Activated T-helper 2 cell treated with anti-CD3 and anti-CD28 coated beads, Interferon-gamma antibody, Interleukin-2, Interleukin-4, amounts not matched to agents 10 μg/mL and 5 μg/mL and 100 μg/mL, durations not matched to agents 14 hours and 24 hours and 36 hours (primary cell): ENCODE measurements at regions of chr19 and their contacts with region 1.

Region 1: DNA sequence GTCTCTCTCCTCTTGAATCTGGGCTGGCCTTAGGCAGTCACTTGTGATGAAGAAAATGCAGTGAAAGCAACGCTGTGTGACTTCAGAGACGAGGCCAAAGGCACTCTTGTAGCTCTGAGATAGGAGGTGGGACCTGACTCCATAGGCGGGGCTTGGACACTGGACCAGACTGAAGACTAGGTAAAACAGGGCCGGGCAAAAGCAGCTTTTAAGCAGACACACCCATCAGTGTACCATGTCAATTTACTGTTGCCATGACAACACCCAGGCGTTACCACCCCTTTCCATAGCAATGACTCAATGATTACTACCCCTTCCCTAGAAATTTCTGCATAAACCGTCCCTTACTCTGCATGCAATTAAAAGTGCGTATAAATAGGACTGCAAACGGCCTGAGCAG is 6.6 kb upstream of the EID2 start:
- DNase-seq: peak; percentile 7
- H3K4me3 Mint-ChIP-seq: no peak overlapping the region
- H3K27ac Mint-ChIP-seq: no peak overlapping the region
- H3K4me1 Mint-ChIP-seq: peaks cover 19% of the 10 kb centered on the region
- H3K27me3 Mint-ChIP-seq: no peaks in the 10 kb centered on the region

Region 2: DNA sequence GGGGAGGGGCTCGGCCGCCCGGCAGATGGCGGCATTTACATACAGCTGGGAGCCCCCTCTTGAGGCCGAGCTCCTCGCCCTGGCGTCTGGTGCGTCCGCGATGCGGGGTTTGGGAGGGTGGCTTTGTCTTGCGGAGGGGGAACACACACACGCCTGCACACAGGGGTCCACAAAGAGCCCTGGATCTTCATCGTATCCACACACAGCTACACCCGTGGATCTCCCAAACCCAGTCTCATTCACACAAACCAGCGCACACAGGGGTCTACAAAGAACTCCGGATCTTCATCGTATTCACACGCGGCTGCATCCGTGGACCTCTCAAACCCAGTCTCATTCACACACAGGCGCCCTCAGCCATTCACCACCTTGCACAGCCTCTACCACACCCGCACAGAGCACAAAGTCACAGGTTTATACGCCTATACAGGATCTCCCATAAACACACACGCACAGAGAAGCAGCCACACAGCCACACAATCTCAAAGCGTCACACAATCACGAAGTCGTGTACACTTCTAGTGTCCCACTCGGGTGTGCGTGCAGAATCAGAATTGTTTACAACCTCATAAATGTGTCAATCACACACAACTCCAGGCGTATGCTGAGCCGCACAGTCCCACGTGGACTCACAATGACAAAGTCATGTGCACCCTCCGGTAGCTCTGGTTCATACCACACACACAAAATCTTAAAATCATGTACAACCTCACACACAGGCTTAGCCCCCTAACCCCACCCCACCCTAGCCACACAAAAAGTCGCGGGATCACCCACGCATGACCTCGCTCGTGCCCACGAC is 48.4 kb before region 1 on chr19:
- intact Hi-C with region 1: no loop called
- DNase-seq: no peak
- H3K4me3 Mint-ChIP-seq: peak overlapping the region; percentile 34
- H3K27ac Mint-ChIP-seq: no peak overlapping the region
- H3K4me1 Mint-ChIP-seq: peaks cover 15% of the 10 kb centered on the region
- H3K27me3 Mint-ChIP-seq: peaks cover 43% of the 10 kb centered on the region

Region 3: GRCh38 chr19:39590265-39590664 is 43.7 kb after region 1 on chr19:
- intact Hi-C with region 1: no loop called
- DNase-seq: no peak
- H3K4me3 Mint-ChIP-seq: no peak overlapping the region
- H3K27ac Mint-ChIP-seq: no peak overlapping the region
- H3K4me1 Mint-ChIP-seq: no peaks in the 10 kb centered on the region
- H3K27me3 Mint-ChIP-seq: no peaks in the 10 kb centered on the region

Region 4: DNA sequence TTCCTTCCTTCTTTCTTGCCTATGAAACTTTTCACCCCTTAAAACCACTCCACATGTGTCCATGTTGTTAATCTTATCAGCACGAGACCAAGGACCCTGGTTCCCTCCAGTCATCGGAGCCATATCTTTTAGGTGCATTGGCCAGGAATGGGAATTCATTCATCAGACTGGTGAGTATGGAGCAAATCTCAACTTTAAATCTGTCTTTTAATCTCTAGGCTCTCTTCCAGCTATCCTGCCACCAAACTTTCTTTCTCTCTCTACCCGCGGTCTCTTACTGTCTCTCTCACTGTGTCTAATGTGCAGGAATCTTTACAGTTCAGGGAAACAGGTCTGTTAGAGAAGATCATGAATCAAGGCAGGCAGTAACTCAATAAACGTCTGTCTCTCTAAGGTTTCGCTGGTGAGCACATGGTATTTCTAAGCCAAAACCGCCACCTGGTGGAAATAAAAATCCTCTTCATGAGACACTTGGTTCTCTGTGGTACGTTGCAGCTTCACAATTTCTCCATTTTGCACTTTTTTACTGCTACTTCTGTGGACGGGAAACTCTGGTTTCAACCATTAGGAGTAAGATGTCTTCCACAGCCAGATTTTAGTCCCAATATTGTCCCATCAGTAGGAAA is 125.3 kb after region 1 on chr19:
- intact Hi-C with region 1: loop called (anchors 1 kb)
- DNase-seq: peak; percentile 31
- H3K4me3 Mint-ChIP-seq: no peak overlapping the region
- H3K27ac Mint-ChIP-seq: no peak overlapping the region
- H3K4me1 Mint-ChIP-seq: peaks cover 22% of the 10 kb centered on the region
- H3K27me3 Mint-ChIP-seq: peaks cover 22% of the 10 kb centered on the region